GM10248 (cell line): ENCODE measurements at regions of chr17 and their contacts with region 1.

Region 1: GRCh38 chr17:57327176-57327970 is 71.0 kb downstream of the MSI2 start:
- DNase-seq: no peak
- CTCF ChIP-seq: no peak

Region 2: DNA sequence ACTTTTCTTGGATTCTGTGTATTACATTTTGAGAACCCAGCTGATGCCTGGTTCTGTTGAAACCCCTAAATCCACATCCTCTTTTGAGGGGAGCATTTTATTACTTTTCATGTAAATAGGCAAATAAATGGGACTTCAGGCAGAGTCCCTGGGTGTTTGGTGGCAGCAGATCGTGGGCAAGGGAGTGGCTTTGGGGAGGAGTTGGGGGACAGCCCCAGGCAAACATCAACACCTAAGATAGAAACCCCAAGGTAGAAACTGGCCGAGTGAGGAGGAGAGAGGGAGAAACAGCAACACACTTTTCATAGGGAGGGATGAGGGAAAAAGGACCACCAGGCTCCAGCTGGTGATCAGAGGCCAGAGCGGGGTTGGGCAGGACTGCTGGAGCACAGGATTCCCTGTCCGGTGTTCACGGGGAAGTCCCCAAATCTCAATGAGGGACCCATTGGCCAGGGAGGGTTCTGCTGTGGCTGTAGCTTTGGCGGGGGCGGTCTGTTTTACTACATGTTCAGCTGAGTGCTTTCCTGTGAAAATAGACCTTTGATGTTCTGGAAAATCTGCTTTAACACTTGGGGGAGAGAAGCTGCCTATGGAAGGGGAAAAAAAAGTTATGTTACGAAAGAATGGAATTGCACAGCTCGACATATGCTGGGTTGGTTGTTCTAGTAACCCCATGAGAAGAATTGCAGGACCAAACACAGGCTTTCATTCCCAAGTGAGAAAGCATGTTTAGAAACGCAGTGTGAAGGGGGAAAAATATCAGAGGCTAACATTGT is 24.5 kb before region 1 on chr17:
- CTCF ChIA-PET with region 1: no interaction called
- POLR2A ChIA-PET with region 1: no interaction called
- DNase-seq: no peak
- CTCF ChIP-seq: no peak

Region 3: GRCh38 chr17:57337390-57337789 is 10.0 kb after region 1 on chr17:
- CTCF ChIA-PET with region 1: interaction called, 15 read pairs
- POLR2A ChIA-PET with region 1: interaction called, 4 read pairs
- DNase-seq: no peak
- CTCF ChIP-seq: no peak